CD4-positive, alpha-beta T cell (primary cell): ENCODE measurements at regions of chr2 and their contacts with region 1.

Region 1: GRCh38 chr2:20097879-20098714 is 46.7 kb upstream of the LAPTM4A start:
- DNase-seq: peak; percentile 60 to 85 (median 72)
- ATAC-seq: peak; percentile 96
- H3K4me3 ChIP-seq: no peak overlapping the region
- H3K4me3 Mint-ChIP-seq: no peak overlapping the region
- H3K27ac ChIP-seq: no peak overlapping the region
- H3K27ac Mint-ChIP-seq: no peak overlapping the region
- H3K4me1 ChIP-seq: peaks cover 2% of the 10 kb centered on the region
- H3K4me1 Mint-ChIP-seq: no peaks in the 10 kb centered on the region
- H3K27me3 ChIP-seq: peaks cover 2 to 6% of the 10 kb centered on the region in 2 experiments
- H3K27me3 Mint-ChIP-seq: peaks cover 21% of the 10 kb centered on the region
- CTCF ChIP-seq: peak; percentile 82

Region 2: DNA sequence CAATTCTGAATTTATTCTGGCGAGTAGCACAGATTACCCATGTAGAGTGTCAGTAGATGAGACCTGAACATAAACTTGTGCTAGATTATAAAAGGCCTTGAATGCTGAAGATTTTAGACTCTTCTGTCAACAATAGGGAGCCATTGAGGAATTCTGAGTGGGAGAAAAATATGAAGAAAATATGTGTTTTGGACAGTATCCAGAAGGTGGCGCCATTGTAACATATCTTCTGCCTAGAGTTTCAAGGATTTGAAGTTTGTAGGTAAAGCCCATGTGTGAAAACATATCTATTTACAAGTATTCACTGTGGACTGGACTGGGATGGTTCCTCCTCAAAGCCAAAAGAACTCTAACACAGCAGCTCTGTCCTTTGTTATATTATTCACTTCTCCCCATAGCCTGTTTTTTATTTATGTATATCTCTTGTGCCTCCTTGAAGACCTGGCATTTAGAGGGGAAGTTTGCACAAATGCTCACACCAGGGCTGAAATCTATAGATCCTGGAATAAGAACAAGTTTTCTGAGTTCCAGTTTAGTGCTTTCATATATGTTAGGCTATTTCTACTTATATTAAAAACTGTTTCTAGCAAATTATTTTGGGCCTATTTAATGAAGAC is 1662.6 kb before region 1 on chr2:
- CTCF ChIA-PET with region 1: no interaction called
- POLR2A ChIA-PET with region 1: no interaction called
- intact Hi-C with region 1: loop called in 1 of 2 experiments (anchors 5 kb)
- DNase-seq: peak in 4 of 14 experiments; percentile 5 to 45 (median 25)
- ATAC-seq: no peak
- H3K4me3 ChIP-seq: no peak overlapping the region
- H3K4me3 Mint-ChIP-seq: no peak overlapping the region
- H3K27ac ChIP-seq: no peak overlapping the region
- H3K27ac Mint-ChIP-seq: no peak overlapping the region
- H3K4me1 ChIP-seq: no peaks in the 10 kb centered on the region
- H3K4me1 Mint-ChIP-seq: no peaks in the 10 kb centered on the region
- H3K27me3 ChIP-seq: no peaks in the 10 kb centered on the region
- H3K27me3 Mint-ChIP-seq: peaks cover 30% of the 10 kb centered on the region
- CTCF ChIP-seq: peak; percentile 49

Region 3: GRCh38 chr2:18520451-18521425 is 1577.4 kb before region 1 on chr2:
- CTCF ChIA-PET with region 1: no interaction called
- POLR2A ChIA-PET with region 1: no interaction called
- intact Hi-C with region 1: loop called (anchors 1 to 10 kb)
- DNase-seq: peak; percentile 57 to 81 (median 70)
- ATAC-seq: peak; percentile 68
- H3K4me3 ChIP-seq: no peak overlapping the region
- H3K4me3 Mint-ChIP-seq: no peak overlapping the region
- H3K27ac ChIP-seq: no peak overlapping the region
- H3K27ac Mint-ChIP-seq: no peak overlapping the region
- H3K4me1 ChIP-seq: no peaks in the 10 kb centered on the region
- H3K4me1 Mint-ChIP-seq: no peaks in the 10 kb centered on the region
- H3K27me3 ChIP-seq: peaks cover 0 to 5% of the 10 kb centered on the region in 2 experiments
- H3K27me3 Mint-ChIP-seq: peaks cover 40% of the 10 kb centered on the region
- CTCF ChIP-seq: peak; percentile 88

Region 4: DNA sequence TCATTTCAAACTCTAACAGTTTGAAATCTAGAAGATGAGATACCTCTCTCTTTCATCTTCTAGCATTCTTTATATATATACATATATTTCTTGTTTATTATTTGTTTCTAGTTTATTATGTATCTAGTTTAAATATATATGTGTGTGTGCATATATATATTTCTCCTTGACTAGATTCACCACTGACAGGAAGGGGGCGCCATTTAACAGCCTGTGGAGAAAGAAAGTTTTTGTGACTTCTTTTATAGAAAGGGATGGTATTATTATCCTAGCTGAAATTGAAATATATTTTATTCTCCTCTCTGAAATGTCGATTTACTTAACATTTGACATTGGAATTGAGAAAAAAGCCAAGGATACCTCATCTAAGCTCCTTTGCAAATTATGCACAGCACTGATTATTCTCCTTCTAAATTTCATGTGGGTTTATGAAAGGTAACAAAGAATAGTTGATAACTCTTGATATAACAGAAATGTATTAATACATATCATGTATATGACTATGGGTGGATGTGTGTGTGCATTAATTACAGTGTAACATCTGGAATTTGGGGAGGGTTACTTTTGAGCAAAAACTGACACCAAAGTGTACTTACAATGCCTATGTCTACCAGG is 1348.1 kb before region 1 on chr2:
- CTCF ChIA-PET with region 1: no interaction called
- POLR2A ChIA-PET with region 1: no interaction called
- intact Hi-C with region 1: loop called (anchors 5 kb)
- DNase-seq: peak in 9 of 14 experiments; percentile 2 to 50 (median 13)
- ATAC-seq: no peak
- H3K4me3 ChIP-seq: no peak overlapping the region
- H3K4me3 Mint-ChIP-seq: no peak overlapping the region
- H3K27ac ChIP-seq: no peak overlapping the region
- H3K27ac Mint-ChIP-seq: no peak overlapping the region
- H3K4me1 ChIP-seq: no peaks in the 10 kb centered on the region
- H3K4me1 Mint-ChIP-seq: no peaks in the 10 kb centered on the region
- H3K27me3 ChIP-seq: no peaks in the 10 kb centered on the region
- H3K27me3 Mint-ChIP-seq: no peaks in the 10 kb centered on the region
- CTCF ChIP-seq: peak; percentile 59

Region 5: GRCh38 chr2:19955544-19956422 is 142.3 kb before region 1 on chr2:
- CTCF ChIA-PET with region 1: interaction called, 5 read pairs
- POLR2A ChIA-PET with region 1: no interaction called
- intact Hi-C with region 1: loop called (anchors 1 kb)
- DNase-seq: peak; percentile 8 to 77 (median 31)
- ATAC-seq: peak; percentile 85
- H3K4me3 ChIP-seq: no peak overlapping the region
- H3K4me3 Mint-ChIP-seq: no peak overlapping the region
- H3K27ac ChIP-seq: no peak overlapping the region
- H3K27ac Mint-ChIP-seq: no peak overlapping the region
- H3K4me1 ChIP-seq: no peaks in the 10 kb centered on the region
- H3K4me1 Mint-ChIP-seq: no peaks in the 10 kb centered on the region
- H3K27me3 ChIP-seq: no peaks in the 10 kb centered on the region
- H3K27me3 Mint-ChIP-seq: no peaks in the 10 kb centered on the region
- CTCF ChIP-seq: peak; percentile 79

Region 6: DNA sequence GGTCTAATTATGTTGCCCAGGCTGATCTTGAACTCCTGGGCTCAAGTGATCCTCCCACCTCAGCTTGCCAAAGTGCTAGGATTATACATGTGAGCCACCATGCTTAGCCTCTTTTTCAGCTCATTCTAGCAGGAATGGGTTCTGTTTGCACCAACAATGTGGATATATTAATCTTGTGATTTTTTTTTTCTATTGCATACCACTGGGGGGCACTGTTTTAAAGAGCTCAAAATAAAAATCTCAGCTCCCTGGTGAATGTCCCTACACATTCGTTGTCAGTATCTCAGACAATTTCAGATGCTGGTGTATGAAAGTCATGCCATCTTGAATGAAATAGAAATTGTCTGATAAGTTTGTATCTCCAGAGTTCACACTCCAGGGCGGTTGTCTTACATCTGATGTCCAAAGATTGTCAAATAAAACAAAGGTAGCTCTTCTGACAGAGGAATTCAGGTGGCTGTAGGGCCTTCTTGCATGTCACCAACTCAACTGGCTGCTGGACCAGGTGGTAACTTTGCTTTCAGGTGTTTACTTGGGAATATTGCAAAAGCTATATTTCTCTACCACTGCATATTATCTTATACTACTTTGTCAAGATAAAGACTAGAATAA is 82.5 kb before region 1 on chr2:
- CTCF ChIA-PET with region 1: interaction called, 4 read pairs
- POLR2A ChIA-PET with region 1: no interaction called
- intact Hi-C with region 1: loop called (anchors 1 kb)
- DNase-seq: peak in 4 of 14 experiments; percentile 23 to 65 (median 48)
- ATAC-seq: peak; percentile 44
- H3K4me3 ChIP-seq: no peak overlapping the region
- H3K4me3 Mint-ChIP-seq: no peak overlapping the region
- H3K27ac ChIP-seq: no peak overlapping the region
- H3K27ac Mint-ChIP-seq: no peak overlapping the region
- H3K4me1 ChIP-seq: peaks cover 14% of the 10 kb centered on the region
- H3K4me1 Mint-ChIP-seq: peaks cover 14% of the 10 kb centered on the region
- H3K27me3 ChIP-seq: peaks cover 12 to 20% of the 10 kb centered on the region in 2 experiments
- H3K27me3 Mint-ChIP-seq: peaks cover 34% of the 10 kb centered on the region
- CTCF ChIP-seq: peak; percentile 72

Region 7: DNA sequence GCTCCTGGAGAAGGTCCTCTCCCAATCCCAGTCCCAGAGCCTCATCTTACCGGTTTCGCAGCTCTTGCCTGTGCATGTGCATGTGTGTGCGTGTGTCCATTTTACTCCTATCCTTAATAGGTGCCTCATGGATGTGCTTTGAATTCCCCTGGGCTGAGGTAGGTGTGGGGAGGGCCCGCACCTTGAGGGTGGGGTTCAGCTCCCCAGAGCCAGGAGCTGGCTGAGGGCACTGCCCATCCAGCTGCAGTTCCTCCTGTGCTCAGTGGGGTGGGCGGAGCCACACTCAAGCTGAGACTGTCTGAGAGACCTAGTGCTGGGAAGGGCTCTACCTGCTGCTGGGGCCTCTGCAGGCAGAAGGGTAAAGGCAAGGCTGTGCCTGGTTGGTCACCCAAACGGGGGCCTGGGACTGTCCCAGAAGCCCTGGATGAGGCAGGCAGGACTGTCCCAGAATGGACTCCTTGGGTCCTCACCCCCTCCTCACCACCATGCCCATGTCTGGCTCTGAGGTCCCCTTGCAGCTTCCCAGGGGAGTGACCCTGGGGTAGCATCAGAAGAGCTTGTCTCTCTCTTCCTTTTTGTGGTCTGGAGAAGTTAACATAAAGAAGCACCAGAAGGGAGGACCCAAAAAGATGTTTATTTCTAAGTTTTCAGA is 577.7 kb after region 1 on chr2:
- CTCF ChIA-PET with region 1: no interaction called
- POLR2A ChIA-PET with region 1: no interaction called
- intact Hi-C with region 1: no loop called
- DNase-seq: peak in 1 of 14 experiments; percentile 40
- ATAC-seq: peak; percentile 78
- H3K4me3 ChIP-seq: no peak overlapping the region
- H3K4me3 Mint-ChIP-seq: no peak overlapping the region
- H3K27ac ChIP-seq: no peak overlapping the region
- H3K27ac Mint-ChIP-seq: no peak overlapping the region
- H3K4me1 ChIP-seq: peaks cover 3% of the 10 kb centered on the region
- H3K4me1 Mint-ChIP-seq: peaks cover 3% of the 10 kb centered on the region
- H3K27me3 ChIP-seq: peaks cover 12 to 24% of the 10 kb centered on the region in 2 experiments
- H3K27me3 Mint-ChIP-seq: peaks cover 31% of the 10 kb centered on the region
- CTCF ChIP-seq: no peak